ENCODE measurements at regions of chr2 and their contacts with region 1.

Region 1: GRCh38 chr2:188983427-188984064 is 9.4 kb downstream of the COL3A1 start:
- DNase-seq: no peak
- ATAC-seq: peak in 2 of 4 donors; percentile 26 to 66
- H3K4me3 ChIP-seq: peak overlapping the region in 3 of 12 donors; percentile 9 to 70 (median 62)
- H3K27ac ChIP-seq: peak overlapping the region in 9 of 12 donors; percentile 28 to 80 (median 50)
- H3K4me1 ChIP-seq: peaks cover 0 to 30% (median 1%) of the 10 kb centered on the region in 12 donors
- H3K27me3 ChIP-seq: no peaks in the 10 kb centered on the region
- CTCF ChIP-seq: peak in 10 of 12 donors; percentile 8 to 44 (median 21)
- POLR2A ChIP-seq: no peak

Region 2: GRCh38 chr2:188524519-188525113 is 458.9 kb before region 1 on chr2:
- intact Hi-C with region 1: loop called (anchors 5 to 10 kb)
- DNase-seq: no peak
- ATAC-seq: peak in 1 of 4 donors; percentile 72
- H3K4me3 ChIP-seq: no peak overlapping the region
- H3K27ac ChIP-seq: no peak overlapping the region
- H3K4me1 ChIP-seq: peaks cover 0 to 11% (median 0%) of the 10 kb centered on the region in 12 donors
- H3K27me3 ChIP-seq: no peaks in the 10 kb centered on the region
- CTCF ChIP-seq: peak; percentile 66 to 89 (median 80)
- POLR2A ChIP-seq: no peak

Region 3: GRCh38 chr2:189164746-189165145 is 181.2 kb after region 1 on chr2:
- intact Hi-C with region 1: no loop called
- DNase-seq: peak in 1 of 5 donors; percentile 35
- ATAC-seq: peak in 1 of 4 donors; percentile 72
- H3K4me3 ChIP-seq: no peak overlapping the region
- H3K27ac ChIP-seq: peak overlapping the region in 1 of 12 donors; percentile 63
- H3K4me1 ChIP-seq: peaks cover 0 to 48% (median 10%) of the 10 kb centered on the region in 12 donors
- H3K27me3 ChIP-seq: no peaks in the 10 kb centered on the region
- CTCF ChIP-seq: no peak
- POLR2A ChIP-seq: no peak